MCF 10A (cell line): ENCODE measurements at regions of chr1 and their contacts with region 1.

Region 1: DNA sequence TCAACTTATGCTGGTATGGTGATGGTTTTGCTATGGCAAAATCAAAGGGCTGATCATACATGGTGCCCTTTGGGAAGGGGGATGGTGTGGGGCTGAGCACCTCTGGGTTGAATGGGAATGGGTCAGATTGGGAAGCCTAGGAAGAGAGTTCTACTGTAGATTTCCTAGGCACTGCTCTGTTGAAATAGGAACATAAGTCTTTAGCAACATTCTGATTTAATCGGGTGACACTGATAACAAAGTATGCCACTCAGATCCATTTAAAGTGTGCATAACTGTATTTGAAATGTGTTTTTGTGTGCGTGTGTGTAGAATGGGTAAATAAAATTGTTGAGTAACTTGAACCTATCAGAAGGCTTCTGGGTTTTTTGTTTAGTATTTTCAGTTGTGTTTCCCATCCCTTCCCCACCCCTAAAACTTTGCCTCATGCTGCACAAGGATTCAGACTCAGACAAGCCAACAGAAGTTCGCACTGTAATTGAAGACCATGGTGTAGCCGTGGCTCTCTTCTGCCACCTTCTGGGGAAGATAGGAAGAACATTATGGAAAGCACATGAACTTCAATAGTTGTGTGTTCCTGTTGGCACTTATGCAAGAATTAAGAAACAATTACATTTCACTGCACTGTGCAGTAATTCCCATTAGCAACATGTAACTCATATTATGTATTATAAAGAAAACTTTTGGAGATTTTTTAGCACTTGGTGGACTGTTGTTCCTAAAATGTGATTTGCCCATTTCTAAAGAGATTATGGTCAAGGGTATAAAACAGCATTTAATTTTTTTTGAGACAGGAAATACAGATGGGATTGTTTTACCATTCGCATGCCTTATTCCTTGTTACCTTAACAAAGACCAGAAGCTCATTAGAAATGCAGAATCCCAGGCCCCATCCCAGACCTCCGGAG is 10.9 kb upstream of the C4BPB start:
- DNase-seq: peak; percentile 96
- H3K4me3 Mint-ChIP-seq: no peak overlapping the region
- H3K27ac Mint-ChIP-seq: no peak overlapping the region
- H3K4me1 Mint-ChIP-seq: peaks cover 23% of the 10 kb centered on the region
- H3K27me3 Mint-ChIP-seq: peaks cover 7% of the 10 kb centered on the region
- CTCF ChIP-seq: peak; percentile 99

Region 2: DNA sequence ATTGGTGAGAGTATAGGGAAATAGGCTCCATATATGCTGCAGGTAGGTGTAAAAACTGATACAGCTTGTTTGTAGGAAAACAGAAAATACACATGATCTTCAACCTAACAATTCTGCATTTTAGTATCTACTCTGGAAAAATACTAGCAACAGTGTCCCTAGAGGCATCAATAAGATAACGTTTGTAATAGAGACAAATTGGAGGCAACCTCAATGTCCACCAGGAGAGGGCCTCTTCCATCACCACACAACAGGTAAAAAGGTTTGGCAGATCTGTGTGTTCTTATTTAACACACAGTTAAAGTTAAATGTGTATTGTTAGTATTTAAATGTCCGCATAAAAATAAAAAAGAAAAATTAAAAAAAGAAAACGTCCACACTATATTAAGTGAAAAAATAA is 470.9 kb before region 1 on chr1:
- CTCF ChIA-PET with region 1: interaction called, 3 read pairs
- POLR2A ChIA-PET with region 1: no interaction called
- intact Hi-C with region 1: loop called (anchors 1 kb)
- DNase-seq: peak; percentile 67
- H3K4me3 Mint-ChIP-seq: no peak overlapping the region
- H3K27ac Mint-ChIP-seq: no peak overlapping the region
- H3K4me1 Mint-ChIP-seq: peaks cover 19% of the 10 kb centered on the region
- H3K27me3 Mint-ChIP-seq: no peaks in the 10 kb centered on the region
- CTCF ChIP-seq: peak; percentile 74

Region 3: GRCh38 chr1:206865013-206865671 is 212.6 kb before region 1 on chr1 and contains the start of gene IL20:
- CTCF ChIA-PET with region 1: interaction called, 3 read pairs
- POLR2A ChIA-PET with region 1: no interaction called
- intact Hi-C with region 1: loop called (anchors 2 kb)
- DNase-seq: peak; percentile 100
- H3K4me3 Mint-ChIP-seq: no peak within 1 kb of the TSS
- H3K27ac Mint-ChIP-seq: no peak within 1 kb of the TSS
- H3K4me1 Mint-ChIP-seq: peaks cover 32% of the 10 kb centered on the region
- H3K27me3 Mint-ChIP-seq: peaks cover 17% of the 10 kb centered on the region
- CTCF ChIP-seq: peak; percentile 100
- total RNA-seq, gene IL20: not detected in 2 replicates

Region 4: DNA sequence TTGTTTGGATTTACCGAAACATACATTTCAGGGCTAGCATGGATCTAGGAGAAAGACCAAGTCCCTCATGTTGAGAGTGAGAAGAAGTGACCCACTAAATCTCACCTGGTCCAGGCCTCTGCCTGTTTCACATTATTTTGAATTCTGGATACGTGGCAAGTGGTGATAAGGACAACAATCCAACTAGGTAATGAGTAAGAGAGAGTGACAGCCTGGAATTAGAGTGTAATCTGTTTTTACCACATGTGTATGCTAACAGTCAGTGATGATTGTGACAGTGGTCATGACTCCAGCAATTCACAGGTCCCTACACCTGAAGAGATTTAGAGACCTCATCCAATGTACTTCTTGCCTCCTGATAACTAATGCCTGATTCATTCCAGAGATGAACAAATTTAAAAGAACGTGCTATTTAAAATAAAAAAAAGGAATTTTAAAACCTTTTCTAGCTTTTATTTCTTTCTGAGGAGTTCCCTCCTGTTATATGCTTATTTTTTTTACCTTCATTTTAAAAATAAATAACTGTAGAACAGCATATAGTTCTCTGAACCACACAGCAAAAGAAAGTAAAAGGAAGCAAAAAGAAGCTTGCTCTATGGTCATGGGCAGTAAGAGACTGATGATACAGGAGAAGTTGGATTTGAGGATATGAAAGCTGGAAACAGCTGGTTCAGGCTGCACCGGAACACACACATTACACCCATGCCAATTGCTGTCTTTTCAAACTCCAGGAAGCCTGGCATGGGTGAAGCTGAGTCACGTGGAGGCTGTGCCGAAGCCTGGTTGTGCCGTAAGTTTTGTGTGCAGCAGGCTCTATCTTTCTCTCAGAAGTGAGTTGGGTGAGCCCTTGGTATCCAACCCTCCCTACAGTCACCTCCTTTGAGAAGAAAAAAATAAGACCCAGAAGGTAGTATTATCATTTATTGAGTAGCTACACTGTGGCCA is 59.8 kb before region 1 on chr1:
- CTCF ChIA-PET with region 1: interaction called, 18 read pairs
- POLR2A ChIA-PET with region 1: interaction called, 84 read pairs
- intact Hi-C with region 1: no loop called
- DNase-seq: peak; percentile 89
- H3K4me3 Mint-ChIP-seq: no peak overlapping the region
- H3K27ac Mint-ChIP-seq: peak overlapping the region; percentile 60
- H3K4me1 Mint-ChIP-seq: peaks cover 49% of the 10 kb centered on the region
- H3K27me3 Mint-ChIP-seq: no peaks in the 10 kb centered on the region
- CTCF ChIP-seq: no peak

Region 5: DNA sequence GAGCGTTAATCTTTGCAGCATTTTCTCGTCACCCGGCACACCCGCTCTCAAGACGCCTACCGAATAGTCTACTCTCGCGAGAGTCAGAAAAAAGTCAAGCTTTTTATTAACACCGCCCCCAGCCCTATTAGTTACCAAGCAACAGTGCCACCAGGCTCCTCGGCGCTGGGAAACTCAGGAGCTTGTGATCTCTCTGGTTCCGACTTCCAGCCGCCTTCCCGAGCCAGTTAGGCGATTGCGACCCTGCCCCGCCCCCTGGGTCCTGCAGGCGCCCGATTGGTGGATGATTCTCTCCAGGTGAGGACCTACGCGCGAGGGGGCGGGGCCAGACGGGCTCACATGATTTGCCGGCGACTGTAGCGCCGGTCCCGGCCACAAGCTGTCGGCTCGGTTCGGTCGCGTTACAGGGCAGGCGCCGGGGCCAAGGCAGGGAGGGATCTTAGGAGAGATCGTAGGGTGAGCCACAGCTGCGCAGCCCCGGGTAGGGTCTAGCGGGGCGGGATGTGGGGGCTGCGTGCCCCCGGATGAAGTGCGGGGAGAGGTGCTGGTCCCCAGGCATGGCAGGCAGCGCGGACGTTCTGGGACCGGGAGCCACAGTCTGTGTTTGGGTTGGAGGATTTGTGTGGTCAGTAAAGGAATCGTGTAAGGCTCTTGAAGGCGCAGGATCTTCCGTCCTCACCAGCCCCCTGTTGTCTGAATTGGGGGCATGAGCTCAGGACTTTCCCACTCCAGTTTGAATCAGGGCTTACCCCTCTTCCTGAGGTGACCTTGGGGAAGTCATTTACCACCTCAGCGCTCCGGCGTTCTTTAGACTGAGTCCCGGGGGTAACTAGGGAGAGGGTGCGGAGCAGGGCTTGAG is 24.6 kb before region 1 on chr1 and contains the start of gene PFKFB2:
- CTCF ChIA-PET with region 1: interaction called, 146 read pairs
- POLR2A ChIA-PET with region 1: interaction called, 399 read pairs
- intact Hi-C with region 1: loop called (anchors 1 kb)
- DNase-seq: peak; percentile 100
- H3K4me3 Mint-ChIP-seq: peak within 1 kb of the TSS; percentile 89
- H3K27ac Mint-ChIP-seq: peak within 1 kb of the TSS; percentile 95
- H3K4me1 Mint-ChIP-seq: peaks cover 51% of the 10 kb centered on the region
- H3K27me3 Mint-ChIP-seq: no peaks in the 10 kb centered on the region
- CTCF ChIP-seq: peak; percentile 24
- total RNA-seq, gene PFKFB2: 21.1 and 22.0 TPM in 2 replicates

Region 6: DNA sequence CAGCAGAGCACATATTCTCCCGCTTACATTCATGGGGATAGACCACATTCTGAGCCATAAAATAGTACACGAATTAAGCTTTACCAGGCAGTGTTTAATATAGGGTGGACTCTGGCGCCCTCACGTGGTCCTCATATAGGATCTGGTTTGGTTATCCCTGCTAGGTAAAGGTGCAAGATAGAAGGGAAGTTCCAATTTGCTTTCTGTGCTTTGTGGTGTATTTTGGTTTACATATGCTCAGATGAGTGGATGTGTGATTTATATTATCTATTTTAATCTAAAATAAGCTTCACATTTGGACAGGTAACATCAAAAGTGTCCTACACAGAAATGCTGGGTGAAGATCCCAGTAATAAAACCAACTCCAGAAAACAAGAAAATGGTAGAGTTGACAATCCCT is 421.8 kb after region 1 on chr1:
- CTCF ChIA-PET with region 1: interaction called, 168 read pairs
- POLR2A ChIA-PET with region 1: interaction called, 3 read pairs
- intact Hi-C with region 1: no loop called
- DNase-seq: peak; percentile 90
- H3K4me3 Mint-ChIP-seq: no peak overlapping the region
- H3K27ac Mint-ChIP-seq: no peak overlapping the region
- H3K4me1 Mint-ChIP-seq: peaks cover 6% of the 10 kb centered on the region
- H3K27me3 Mint-ChIP-seq: peaks cover 68% of the 10 kb centered on the region
- CTCF ChIP-seq: peak; percentile 97